T-cell (primary cell): ENCODE measurements at regions of chr6 and their contacts with region 1.

Region 1: GRCh38 chr6:132401120-132401945 is at the start of gene MOXD1:
- DNase-seq: no peak
- ATAC-seq: peak in 2 of 4 experiments; percentile 19 to 23
- H3K4me3 ChIP-seq: peak within 1 kb of the TSS in 1 of 2 donors; percentile 57
- H3K4me3 Mint-ChIP-seq: peak within 1 kb of the TSS; percentile 41 to 72 (median 51)
- H3K27ac ChIP-seq: no peak within 1 kb of the TSS
- H3K27ac Mint-ChIP-seq: no peak within 1 kb of the TSS
- H3K4me1 ChIP-seq: peaks cover 0 to 12% of the 10 kb centered on the region in 2 experiments
- H3K4me1 Mint-ChIP-seq: peaks cover 6 to 16% (median 10%) of the 10 kb centered on the region in 3 donors
- H3K27me3 ChIP-seq: peaks cover 19 to 24% of the 10 kb centered on the region in 2 experiments
- H3K27me3 Mint-ChIP-seq: peaks cover 52 to 59% of the 10 kb centered on the region in 2 donors
- total RNA-seq, gene MOXD1: 0.13 to 0.53 (median 0.15) TPM in 4 of 5 donors, not detected in the other

Region 2: GRCh38 chr6:132476688-132477087 is 75.4 kb after region 1 on chr6:
- CTCF ChIA-PET with region 1: no interaction called
- POLR2A ChIA-PET with region 1: interaction called in 1 of 2 experiments, 10 read pairs
- DNase-seq: no peak
- ATAC-seq: no peak
- H3K4me3 ChIP-seq: no peak overlapping the region
- H3K4me3 Mint-ChIP-seq: no peak overlapping the region
- H3K27ac ChIP-seq: no peak overlapping the region
- H3K27ac Mint-ChIP-seq: no peak overlapping the region
- H3K4me1 ChIP-seq: no peaks in the 10 kb centered on the region
- H3K4me1 Mint-ChIP-seq: peaks cover 0 to 9% (median 4%) of the 10 kb centered on the region in 3 donors
- H3K27me3 ChIP-seq: no peaks in the 10 kb centered on the region
- H3K27me3 Mint-ChIP-seq: no peaks in the 10 kb centered on the region